A673 (cell line): ENCODE measurements at regions of chr14 and their contacts with region 1.

Region 1: DNA sequence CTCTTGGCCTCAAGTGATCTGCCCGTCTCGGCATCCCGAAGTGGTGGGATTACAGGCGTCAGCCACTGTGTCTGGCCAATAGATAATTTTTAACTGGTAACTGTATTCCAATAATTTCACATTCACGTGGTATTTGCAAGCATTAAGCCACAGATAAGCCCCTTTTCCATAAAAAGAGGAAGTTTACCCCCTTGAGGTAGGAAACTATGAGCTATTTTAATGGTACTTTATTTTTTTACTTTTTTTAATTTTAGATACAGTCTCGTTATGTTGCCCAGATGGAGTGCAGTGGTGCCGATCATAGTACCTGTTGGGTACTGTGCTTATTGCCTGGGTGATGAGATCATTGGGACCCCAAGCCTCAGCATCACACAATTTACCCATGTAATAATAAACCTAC is 42.9 kb upstream of the AP4S1 start:
- DNase-seq: no peak
- H3K4me3 ChIP-seq: no peak overlapping the region
- H3K27ac ChIP-seq: no peak overlapping the region
- H3K4me1 ChIP-seq: no peaks in the 10 kb centered on the region
- H3K27me3 ChIP-seq: no peaks in the 10 kb centered on the region
- CTCF ChIP-seq: no peak

Region 2: GRCh38 chr14:31084385-31084784 is 101.9 kb after region 1 on chr14:
- CTCF ChIA-PET with region 1: interaction called, 3 read pairs
- POLR2A ChIA-PET with region 1: no interaction called
- intact Hi-C with region 1: loop called (anchors 1 kb)
- DNase-seq: no peak
- H3K4me3 ChIP-seq: no peak overlapping the region
- H3K27ac ChIP-seq: no peak overlapping the region
- H3K4me1 ChIP-seq: no peaks in the 10 kb centered on the region
- H3K27me3 ChIP-seq: no peaks in the 10 kb centered on the region
- CTCF ChIP-seq: no peak

Region 3: DNA sequence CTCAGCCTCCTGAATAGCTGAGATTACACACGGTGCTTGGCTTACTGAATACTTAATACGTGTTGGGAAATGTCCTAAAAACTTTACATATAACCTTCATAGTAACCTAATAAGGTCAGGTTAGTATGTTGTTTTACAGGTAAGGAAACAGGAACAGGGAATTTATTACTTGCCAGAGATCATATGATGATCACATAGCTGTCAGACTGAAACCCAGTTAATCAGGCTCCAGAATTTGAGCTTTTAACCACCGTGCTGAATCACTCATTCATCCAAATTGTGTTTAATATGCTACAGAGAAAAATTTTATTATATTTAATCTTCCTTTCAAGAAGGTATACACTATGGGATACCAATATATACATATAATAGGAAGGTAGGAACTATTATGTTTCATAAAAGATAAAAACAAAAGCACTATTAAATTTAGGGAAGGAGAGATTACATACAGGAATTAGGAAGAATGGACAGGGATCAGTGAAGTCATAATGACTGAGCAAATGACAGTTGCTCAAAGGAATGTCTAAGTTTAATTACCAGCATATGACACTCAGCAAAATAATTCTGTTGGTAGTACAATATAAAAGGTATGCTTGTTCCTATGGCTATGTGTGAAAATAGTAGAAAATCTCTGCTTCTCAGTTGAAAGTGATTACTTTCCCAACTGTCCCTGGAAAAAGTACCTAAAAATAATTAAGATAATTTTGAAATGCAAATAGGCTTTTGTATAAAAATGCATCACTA is 378.6 kb after region 1 on chr14:
- CTCF ChIA-PET with region 1: no interaction called
- POLR2A ChIA-PET with region 1: no interaction called
- intact Hi-C with region 1: loop called (anchors 5 kb)
- DNase-seq: peak; percentile 19
- H3K4me3 ChIP-seq: no peak overlapping the region
- H3K27ac ChIP-seq: no peak overlapping the region
- H3K4me1 ChIP-seq: no peaks in the 10 kb centered on the region
- H3K27me3 ChIP-seq: no peaks in the 10 kb centered on the region
- CTCF ChIP-seq: no peak